OCI-LY7 (cell line): ENCODE measurements at regions of chr7 and their contacts with region 1.

Region 1: DNA sequence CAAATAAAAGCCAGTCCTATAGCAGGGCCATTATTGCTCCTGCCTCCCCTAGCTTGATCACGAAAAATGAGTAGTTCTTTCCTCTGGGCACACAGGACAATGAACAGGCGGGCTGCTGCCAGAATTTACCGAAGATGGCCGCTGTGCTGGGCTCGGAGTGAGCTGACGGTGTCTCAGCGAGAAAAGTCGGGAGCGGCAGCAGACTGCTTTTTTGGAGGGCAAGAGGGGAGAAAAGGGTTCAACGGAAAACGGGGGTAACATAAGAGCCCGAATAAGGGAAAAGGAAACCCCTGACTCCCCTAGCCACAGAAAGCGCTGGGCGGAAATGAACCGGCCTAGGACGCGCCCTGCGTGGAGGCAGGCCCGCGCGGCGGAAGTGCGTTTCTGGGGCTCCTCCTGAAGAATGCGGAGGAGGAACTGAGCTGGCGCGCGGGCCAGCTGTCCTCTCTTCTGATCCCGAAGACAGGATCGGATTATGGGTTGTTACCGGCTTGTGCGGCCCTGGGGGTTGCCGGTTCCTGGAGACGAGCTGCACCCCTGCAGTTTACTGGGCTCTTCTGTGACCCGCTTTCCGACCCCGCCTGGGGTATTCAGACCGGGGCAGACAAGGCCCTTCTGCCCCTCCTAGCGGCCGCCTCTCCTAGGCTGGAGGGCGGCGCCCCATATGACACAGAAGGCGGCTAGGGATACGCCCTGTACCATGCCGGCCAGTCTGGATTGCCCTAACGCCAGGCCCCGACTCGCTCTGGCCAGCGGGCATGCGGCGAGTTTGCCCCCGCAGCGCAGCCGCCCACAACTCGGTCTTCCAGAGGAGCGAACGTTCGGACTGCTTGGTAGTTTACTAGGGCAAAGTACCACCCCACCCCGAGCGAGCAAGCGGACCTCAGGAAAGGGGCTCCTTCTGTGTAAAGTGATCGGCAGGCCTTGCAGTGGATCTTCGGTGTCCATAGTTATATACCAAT is 30.1 kb upstream of the KMT2E start:
- DNase-seq: peak; percentile 84
- H3K4me3 ChIP-seq: peak overlapping the region; percentile 72
- H3K27ac ChIP-seq: peak overlapping the region; percentile 80
- H3K4me1 ChIP-seq: peaks cover 83% of the 10 kb centered on the region
- CTCF ChIP-seq: peak; percentile 65

Region 2: GRCh38 chr7:104943502-104944343 is 40.1 kb before region 1 on chr7:
- CTCF ChIA-PET with region 1: interaction called, 3 read pairs
- POLR2A ChIA-PET with region 1: interaction called, 10 read pairs
- intact Hi-C with region 1: loop called (anchors 1 kb)
- DNase-seq: peak; percentile 88
- H3K4me3 ChIP-seq: peak overlapping the region; percentile 65
- H3K27ac ChIP-seq: peak overlapping the region; percentile 96
- H3K4me1 ChIP-seq: peaks cover 86% of the 10 kb centered on the region
- CTCF ChIP-seq: no peak

Region 3: GRCh38 chr7:105046414-105046813 is 62.6 kb after region 1 on chr7:
- CTCF ChIA-PET with region 1: interaction called, 3 read pairs
- POLR2A ChIA-PET with region 1: interaction called, 3 read pairs
- intact Hi-C with region 1: loop called (anchors 1 kb)
- DNase-seq: no peak
- H3K4me3 ChIP-seq: no peak overlapping the region
- H3K27ac ChIP-seq: no peak overlapping the region
- H3K4me1 ChIP-seq: no peaks in the 10 kb centered on the region
- CTCF ChIP-seq: no peak

Region 4: GRCh38 chr7:105336009-105336408 is 352.1 kb after region 1 on chr7:
- CTCF ChIA-PET with region 1: no interaction called
- POLR2A ChIA-PET with region 1: no interaction called
- intact Hi-C with region 1: loop called (anchors 5 kb)
- DNase-seq: peak; percentile 10
- H3K4me3 ChIP-seq: no peak overlapping the region
- H3K27ac ChIP-seq: no peak overlapping the region
- H3K4me1 ChIP-seq: no peaks in the 10 kb centered on the region
- CTCF ChIP-seq: peak; percentile 76

Region 5: GRCh38 chr7:105589356-105590077 is 605.7 kb after region 1 on chr7:
- CTCF ChIA-PET with region 1: no interaction called
- POLR2A ChIA-PET with region 1: no interaction called
- intact Hi-C with region 1: loop called (anchors 2 kb)
- DNase-seq: peak; percentile 78
- H3K4me3 ChIP-seq: no peak overlapping the region
- H3K27ac ChIP-seq: no peak overlapping the region
- H3K4me1 ChIP-seq: peaks cover 6% of the 10 kb centered on the region
- CTCF ChIP-seq: peak; percentile 90